MCF 10A (cell line): ENCODE measurements at regions of chr2 and their contacts with region 1.

Region 1: GRCh38 chr2:152525277-152525838 is 190.4 kb downstream of the FMNL2 start:
- DNase-seq: peak; percentile 69
- H3K4me3 Mint-ChIP-seq: peak overlapping the region; percentile 5
- H3K27ac Mint-ChIP-seq: peak overlapping the region; percentile 26
- H3K4me1 Mint-ChIP-seq: peaks cover 35% of the 10 kb centered on the region
- H3K27me3 Mint-ChIP-seq: no peaks in the 10 kb centered on the region
- CTCF ChIP-seq: no peak

Region 2: GRCh38 chr2:152166633-152167032 is 358.7 kb before region 1 on chr2:
- CTCF ChIA-PET with region 1: no interaction called
- POLR2A ChIA-PET with region 1: no interaction called
- intact Hi-C with region 1: no loop called
- DNase-seq: no peak
- H3K4me3 Mint-ChIP-seq: no peak overlapping the region
- H3K27ac Mint-ChIP-seq: no peak overlapping the region
- H3K4me1 Mint-ChIP-seq: peaks cover 3% of the 10 kb centered on the region
- H3K27me3 Mint-ChIP-seq: no peaks in the 10 kb centered on the region
- CTCF ChIP-seq: no peak

Region 3: GRCh38 chr2:152513681-152514080 is 11.7 kb before region 1 on chr2:
- CTCF ChIA-PET with region 1: no interaction called
- POLR2A ChIA-PET with region 1: interaction called, 13 read pairs
- intact Hi-C with region 1: no loop called
- DNase-seq: peak; percentile 87
- H3K4me3 Mint-ChIP-seq: no peak overlapping the region
- H3K27ac Mint-ChIP-seq: peak overlapping the region; percentile 75
- H3K4me1 Mint-ChIP-seq: peaks cover 30% of the 10 kb centered on the region
- H3K27me3 Mint-ChIP-seq: no peaks in the 10 kb centered on the region
- CTCF ChIP-seq: no peak

Region 4: DNA sequence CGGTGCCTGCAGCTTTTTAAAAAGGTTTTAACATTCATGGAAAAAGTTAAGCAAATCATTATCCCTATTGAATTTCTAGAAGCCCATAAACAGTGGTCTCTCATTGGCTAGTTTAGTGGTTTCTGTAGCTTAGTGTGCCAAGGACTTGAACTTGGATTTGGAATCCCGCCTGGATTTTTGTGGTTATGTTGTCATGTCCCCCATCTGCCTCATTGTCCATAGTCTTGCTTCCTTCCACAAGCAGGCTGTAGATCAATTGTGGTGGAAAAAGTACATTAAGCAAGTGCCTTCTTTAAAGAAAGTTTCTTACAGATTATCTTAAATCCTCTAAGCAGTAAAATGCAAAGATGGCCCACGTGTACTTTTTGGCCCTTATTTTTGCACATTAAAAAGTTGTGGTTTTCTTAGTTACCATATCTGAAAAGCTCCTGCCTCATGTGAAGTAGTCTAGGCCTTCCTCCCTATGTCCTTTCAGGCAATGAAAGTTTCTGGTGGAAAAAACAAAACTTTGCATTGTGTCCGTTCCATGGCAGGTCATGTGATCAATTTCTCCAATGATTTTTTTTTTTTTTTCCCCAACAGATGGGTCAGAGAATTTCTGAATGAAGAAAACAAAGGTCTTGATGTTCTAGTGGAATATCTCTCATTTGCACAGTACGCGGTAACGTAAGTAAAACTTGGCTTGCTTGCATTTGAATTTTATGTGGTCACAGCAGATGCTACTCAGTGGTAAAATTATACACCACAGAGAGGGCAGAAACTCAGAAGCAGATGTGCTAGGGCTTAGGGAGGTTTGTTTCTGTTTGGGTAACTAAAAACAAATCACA is 33.0 kb after region 1 on chr2:
- CTCF ChIA-PET with region 1: no interaction called
- POLR2A ChIA-PET with region 1: no interaction called
- intact Hi-C with region 1: no loop called
- DNase-seq: peak; percentile 64
- H3K4me3 Mint-ChIP-seq: no peak overlapping the region
- H3K27ac Mint-ChIP-seq: no peak overlapping the region
- H3K4me1 Mint-ChIP-seq: peaks cover 12% of the 10 kb centered on the region
- H3K27me3 Mint-ChIP-seq: no peaks in the 10 kb centered on the region
- CTCF ChIP-seq: no peak

Region 5: GRCh38 chr2:152573168-152573567 is 47.8 kb after region 1 on chr2:
- CTCF ChIA-PET with region 1: no interaction called
- POLR2A ChIA-PET with region 1: no interaction called
- intact Hi-C with region 1: loop called (anchors 5 kb)
- DNase-seq: peak; percentile 69
- H3K4me3 Mint-ChIP-seq: no peak overlapping the region
- H3K27ac Mint-ChIP-seq: peak overlapping the region; percentile 37
- H3K4me1 Mint-ChIP-seq: peaks cover 16% of the 10 kb centered on the region
- H3K27me3 Mint-ChIP-seq: no peaks in the 10 kb centered on the region
- CTCF ChIP-seq: no peak